Naive thymus-derived CD4-positive, alpha-beta T cell (primary cell): ENCODE measurements at regions of chr10 and their contacts with region 1.

Region 1: DNA sequence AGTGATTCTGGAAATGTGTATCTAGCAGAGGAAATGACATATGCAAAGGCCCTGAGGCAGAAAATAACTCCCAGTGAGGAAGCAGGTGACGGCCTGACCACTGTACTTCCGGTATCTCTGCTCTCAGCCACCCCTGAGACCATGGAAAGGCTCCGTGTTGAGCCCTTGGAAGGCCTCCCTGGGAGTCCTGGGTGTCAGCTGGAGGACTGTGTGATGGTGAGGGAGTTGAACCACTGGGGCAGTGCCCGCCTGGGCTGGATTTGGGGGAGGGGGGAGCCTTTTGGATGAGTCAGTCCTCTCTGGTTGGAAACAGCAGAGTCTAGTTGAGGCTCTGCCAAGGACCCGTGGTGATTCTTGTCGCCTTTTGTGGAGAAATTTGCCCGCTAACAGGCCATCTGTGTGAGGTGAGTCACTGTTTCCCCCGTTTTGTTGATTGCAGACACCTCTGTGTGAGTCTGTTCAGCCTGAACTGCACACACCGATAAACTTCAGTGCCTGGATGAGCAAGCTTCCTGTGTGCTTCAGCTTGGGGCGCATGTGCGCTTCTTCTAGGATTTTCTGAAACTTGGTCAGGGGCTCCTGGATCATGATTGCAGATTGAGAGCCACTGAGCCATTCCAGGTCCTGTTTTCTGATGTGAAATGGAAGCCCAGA is 98.6 kb downstream of the GRK5 start:
- DNase-seq: peak; percentile 38 to 93 (median 70)
- ATAC-seq: peak; percentile 85
- H3K4me3 ChIP-seq: peak overlapping the region; percentile 65
- H3K4me3 Mint-ChIP-seq: peak overlapping the region; percentile 71 to 93 (median 90)
- H3K27ac ChIP-seq: peak overlapping the region; percentile 90
- H3K27ac Mint-ChIP-seq: peak overlapping the region; percentile 94 to 99 (median 97)
- H3K4me1 ChIP-seq: peaks cover 47 to 53% of the 10 kb centered on the region in 2 donors
- H3K4me1 Mint-ChIP-seq: peaks cover 50 to 87% (median 74%) of the 10 kb centered on the region in 7 donors
- H3K27me3 ChIP-seq: no peaks in the 10 kb centered on the region
- H3K27me3 Mint-ChIP-seq: peaks cover 0 to 2% (median 0%) of the 10 kb centered on the region in 5 donors

Region 2: GRCh38 chr10:119165171-119166110 is 140.5 kb before region 1 on chr10 and contains the start of gene SFXN4:
- CTCF ChIA-PET with region 1: no interaction called
- POLR2A ChIA-PET with region 1: interaction called, 3 read pairs
- intact Hi-C with region 1: loop called in 1 of 2 experiments (anchors 1 kb)
- DNase-seq: peak; percentile 72 to 87 (median 84)
- ATAC-seq: peak; percentile 98
- H3K4me3 ChIP-seq: peak within 1 kb of the TSS; percentile 95
- H3K4me3 Mint-ChIP-seq: peak within 1 kb of the TSS; percentile 89 to 95 (median 92)
- H3K27ac ChIP-seq: peak within 1 kb of the TSS; percentile 88
- H3K27ac Mint-ChIP-seq: peak within 1 kb of the TSS; percentile 85 to 98 (median 95)
- H3K4me1 ChIP-seq: peaks cover 12 to 15% of the 10 kb centered on the region in 2 donors
- H3K4me1 Mint-ChIP-seq: peaks cover 22 to 39% (median 32%) of the 10 kb centered on the region in 7 donors
- H3K27me3 ChIP-seq: no peaks in the 10 kb centered on the region
- H3K27me3 Mint-ChIP-seq: no peaks in the 10 kb centered on the region
- total RNA-seq, gene SFXN4: 11.8 to 28.1 (median 23.1) TPM

Region 3: GRCh38 chr10:119268871-119269506 is 37.0 kb before region 1 on chr10:
- CTCF ChIA-PET with region 1: no interaction called
- POLR2A ChIA-PET with region 1: interaction called, 15 read pairs
- intact Hi-C with region 1: loop called (anchors 1 kb)
- DNase-seq: peak; percentile 51 to 97 (median 89)
- ATAC-seq: peak; percentile 92
- H3K4me3 ChIP-seq: peak overlapping the region; percentile 20
- H3K4me3 Mint-ChIP-seq: peak overlapping the region; percentile 52 to 77 (median 64)
- H3K27ac ChIP-seq: peak overlapping the region; percentile 96
- H3K27ac Mint-ChIP-seq: peak overlapping the region; percentile 92 to 100 (median 98)
- H3K4me1 ChIP-seq: peaks cover 43 to 48% of the 10 kb centered on the region in 2 donors
- H3K4me1 Mint-ChIP-seq: peaks cover 28 to 72% (median 64%) of the 10 kb centered on the region in 7 donors
- H3K27me3 ChIP-seq: no peaks in the 10 kb centered on the region
- H3K27me3 Mint-ChIP-seq: no peaks in the 10 kb centered on the region

Region 4: GRCh38 chr10:119445311-119445934 is 139.4 kb after region 1 on chr10:
- CTCF ChIA-PET with region 1: interaction called, 4 read pairs
- POLR2A ChIA-PET with region 1: no interaction called
- intact Hi-C with region 1: loop called in 1 of 2 experiments (anchors 1 kb)
- DNase-seq: peak; percentile 64 to 89 (median 76)
- ATAC-seq: peak; percentile 85
- H3K4me3 ChIP-seq: no peak overlapping the region
- H3K4me3 Mint-ChIP-seq: peak overlapping the region in 1 of 10 donors; percentile 60
- H3K27ac ChIP-seq: no peak overlapping the region
- H3K27ac Mint-ChIP-seq: peak overlapping the region in 8 of 9 donors; percentile 6 to 81 (median 52)
- H3K4me1 ChIP-seq: no peaks in the 10 kb centered on the region
- H3K4me1 Mint-ChIP-seq: peaks cover 12 to 23% (median 17%) of the 10 kb centered on the region in 7 donors
- H3K27me3 ChIP-seq: no peaks in the 10 kb centered on the region
- H3K27me3 Mint-ChIP-seq: no peaks in the 10 kb centered on the region

Region 5: GRCh38 chr10:119650692-119651513 is 344.9 kb after region 1 on chr10 and contains the start of gene BAG3:
- CTCF ChIA-PET with region 1: no interaction called
- POLR2A ChIA-PET with region 1: no interaction called
- intact Hi-C with region 1: loop called in 1 of 2 experiments (anchors 1 kb)
- DNase-seq: peak; percentile 50 to 84 (median 67)
- ATAC-seq: peak; percentile 88
- H3K4me3 ChIP-seq: peak within 1 kb of the TSS; percentile 83
- H3K4me3 Mint-ChIP-seq: peak within 1 kb of the TSS; percentile 93 to 100 (median 97)
- H3K27ac ChIP-seq: peak within 1 kb of the TSS; percentile 93
- H3K27ac Mint-ChIP-seq: peak within 1 kb of the TSS; percentile 91 to 99 (median 97)
- H3K4me1 ChIP-seq: peaks cover 20 to 29% of the 10 kb centered on the region in 2 donors
- H3K4me1 Mint-ChIP-seq: peaks cover 29 to 48% (median 44%) of the 10 kb centered on the region in 7 donors
- H3K27me3 ChIP-seq: no peaks in the 10 kb centered on the region
- H3K27me3 Mint-ChIP-seq: peaks cover 0 to 2% (median 0%) of the 10 kb centered on the region in 5 donors
- total RNA-seq, gene BAG3: 21.9 to 44.5 (median 23.1) TPM